Activated CD4-positive, alpha-beta T cell treated with anti-CD3 and anti-CD28 coated beads for 36 hours (primary cell): ENCODE measurements at regions of chr6 and their contacts with region 1.

Region 1: DNA sequence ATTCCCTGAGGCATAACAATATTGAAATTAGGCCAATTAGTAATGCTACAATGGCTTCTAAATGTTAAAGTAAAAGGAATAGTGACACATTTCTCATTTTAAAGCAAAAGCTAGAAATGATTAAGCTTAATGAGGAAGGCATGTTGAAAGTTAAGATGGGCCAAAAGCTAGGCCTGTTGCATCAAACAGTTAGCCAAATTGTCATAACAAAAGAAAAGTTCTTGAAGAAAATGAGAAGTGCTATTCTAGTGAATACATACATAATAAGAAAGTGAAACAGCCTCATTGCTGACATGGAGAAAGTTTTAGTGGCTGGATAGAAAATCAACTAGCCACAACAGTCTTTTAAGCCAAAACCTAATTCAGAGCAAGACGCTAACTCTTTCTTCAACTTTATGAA is 12.9 kb downstream of the OR2A4 start:
- DNase-seq: no peak
- ATAC-seq: peak; percentile 70
- H3K4me3 Mint-ChIP-seq: no peak overlapping the region
- H3K27ac Mint-ChIP-seq: peak overlapping the region; percentile 51
- H3K4me1 Mint-ChIP-seq: peaks cover 14% of the 10 kb centered on the region
- H3K27me3 Mint-ChIP-seq: no peaks in the 10 kb centered on the region

Region 2: GRCh38 chr6:131727868-131728267 is 39.6 kb after region 1 on chr6:
- CTCF ChIA-PET with region 1: interaction called, 3 read pairs
- POLR2A ChIA-PET with region 1: no interaction called
- intact Hi-C with region 1: loop called in 1 of 2 experiments (anchors 2 kb)
- DNase-seq: no peak
- ATAC-seq: no peak
- H3K4me3 Mint-ChIP-seq: no peak overlapping the region
- H3K27ac Mint-ChIP-seq: no peak overlapping the region
- H3K4me1 Mint-ChIP-seq: no peaks in the 10 kb centered on the region
- H3K27me3 Mint-ChIP-seq: peaks cover 3% of the 10 kb centered on the region

Region 3: DNA sequence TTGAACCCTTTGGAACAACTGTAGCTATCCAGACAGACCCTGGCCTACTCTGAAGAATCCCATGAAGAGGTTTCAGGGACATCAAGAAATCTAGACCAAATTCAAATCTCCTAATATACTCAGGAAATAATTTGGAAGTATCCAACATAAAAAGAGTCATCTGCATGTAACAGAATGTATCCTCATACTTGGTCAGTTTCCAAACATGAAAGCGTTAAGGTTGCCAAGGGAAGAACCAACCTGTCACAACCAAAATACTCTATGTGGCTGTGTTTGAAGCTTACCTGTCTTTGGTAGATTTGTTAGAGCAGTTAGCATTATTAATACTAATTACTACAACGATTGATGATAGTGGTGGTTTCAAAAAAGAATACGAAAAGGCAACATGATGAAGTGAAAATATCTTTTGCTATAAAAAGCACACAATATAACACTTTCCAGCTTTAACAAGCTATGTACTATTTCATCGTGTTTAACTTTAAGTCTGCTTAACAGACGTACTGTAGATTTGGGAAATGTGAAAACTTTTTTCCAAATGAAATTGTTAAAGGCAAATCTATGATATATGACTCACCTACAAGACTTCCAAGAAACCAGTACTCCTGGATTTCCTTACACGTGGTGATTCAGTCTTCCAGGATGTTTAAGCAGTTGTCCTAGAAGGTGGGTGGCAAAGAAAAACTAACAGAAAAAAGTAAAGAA is 72.9 kb after region 1 on chr6:
- CTCF ChIA-PET with region 1: no interaction called
- POLR2A ChIA-PET with region 1: no interaction called
- intact Hi-C with region 1: no loop called
- DNase-seq: no peak
- ATAC-seq: no peak
- H3K4me3 Mint-ChIP-seq: no peak overlapping the region
- H3K27ac Mint-ChIP-seq: no peak overlapping the region
- H3K4me1 Mint-ChIP-seq: no peaks in the 10 kb centered on the region
- H3K27me3 Mint-ChIP-seq: peaks cover 14% of the 10 kb centered on the region

Region 4: DNA sequence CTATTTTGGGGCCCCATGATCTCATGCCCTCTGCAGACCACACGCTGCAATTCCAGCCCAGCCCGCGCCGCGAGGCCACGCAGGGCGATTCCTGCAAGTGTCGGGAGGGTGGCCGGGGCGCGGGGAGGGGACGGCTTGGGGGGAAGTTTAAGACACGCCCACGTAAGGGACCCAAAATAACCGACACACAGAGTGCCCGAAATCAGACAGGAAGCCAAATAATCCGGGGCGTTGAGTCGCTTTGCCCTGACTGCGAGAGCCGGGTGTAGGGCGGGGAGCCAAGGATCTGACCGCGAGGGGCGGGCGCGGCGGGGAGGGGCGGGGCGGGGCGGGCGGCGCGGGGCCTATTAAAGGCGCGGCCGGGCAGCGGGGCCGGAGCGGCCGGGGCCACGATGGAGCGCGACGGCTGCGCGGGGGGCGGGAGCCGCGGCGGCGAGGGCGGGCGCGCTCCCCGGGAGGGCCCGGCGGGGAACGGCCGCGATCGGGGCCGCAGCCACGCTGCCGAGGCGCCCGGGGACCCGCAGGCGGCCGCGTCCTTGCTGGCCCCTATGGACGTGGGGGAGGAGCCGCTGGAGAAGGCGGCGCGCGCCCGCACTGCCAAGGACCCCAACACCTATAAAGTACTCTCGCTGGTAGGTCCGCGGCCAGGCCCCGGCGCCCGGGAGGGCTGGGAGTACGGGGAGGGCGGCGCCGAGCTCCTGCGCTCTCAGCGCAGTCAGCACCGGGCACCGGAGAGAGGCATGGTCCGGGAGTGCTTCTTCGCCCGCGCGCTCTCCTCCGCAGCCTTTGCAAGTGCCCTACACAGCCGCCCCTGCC is 119.6 kb after region 1 on chr6 and contains the start of gene ENPP1:
- CTCF ChIA-PET with region 1: no interaction called
- POLR2A ChIA-PET with region 1: no interaction called
- intact Hi-C with region 1: loop called in 1 of 2 experiments (anchors 5 kb)
- DNase-seq: peak; percentile 62
- ATAC-seq: peak; percentile 83
- H3K4me3 Mint-ChIP-seq: peak within 1 kb of the TSS; percentile 76
- H3K27ac Mint-ChIP-seq: no peak within 1 kb of the TSS
- H3K4me1 Mint-ChIP-seq: peaks cover 16% of the 10 kb centered on the region
- H3K27me3 Mint-ChIP-seq: peaks cover 45% of the 10 kb centered on the region
- total RNA-seq, gene ENPP1: 0.23 to 0.42 TPM